CD8-positive, alpha-beta memory T cell (primary cell): ENCODE measurements at regions of chr1 and their contacts with region 1.

Region 1: GRCh38 chr1:178532392-178532791 is 19.5 kb downstream of the TEX35 start:
- DNase-seq: peak; percentile 53 to 71 (median 59)
- H3K4me3 ChIP-seq: no peak overlapping the region
- H3K4me3 Mint-ChIP-seq: peak overlapping the region in 1 of 7 donors; percentile 73
- H3K27ac ChIP-seq: no peak overlapping the region
- H3K27ac Mint-ChIP-seq: no peak overlapping the region
- H3K4me1 ChIP-seq: peaks cover 4% of the 10 kb centered on the region
- H3K4me1 Mint-ChIP-seq: peaks cover 0 to 5% (median 2%) of the 10 kb centered on the region in 3 donors
- H3K27me3 ChIP-seq: no peaks in the 10 kb centered on the region
- H3K27me3 Mint-ChIP-seq: peaks cover 2 to 7% of the 10 kb centered on the region in 2 donors

Region 2: DNA sequence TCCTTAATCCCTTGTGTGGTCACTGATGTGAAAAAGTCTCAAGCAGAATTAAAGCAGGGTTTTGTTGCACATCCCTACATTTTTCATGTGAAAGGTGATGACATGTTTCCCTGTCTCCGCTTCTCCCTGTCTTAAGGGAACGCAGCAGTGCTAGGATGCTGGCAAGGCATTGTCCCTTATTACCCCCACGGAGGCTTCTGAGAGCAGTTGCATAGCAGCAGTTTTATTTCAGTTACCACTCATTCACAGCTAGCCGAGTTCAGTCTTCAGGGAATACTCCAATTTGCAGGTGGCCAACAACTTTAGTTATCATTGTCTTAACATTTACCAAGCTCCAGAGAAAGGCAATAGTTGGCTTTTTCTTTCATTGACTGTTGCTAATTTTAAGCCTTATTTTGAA is 124.7 kb before region 1 on chr1:
- CTCF ChIA-PET with region 1: no interaction called
- POLR2A ChIA-PET with region 1: no interaction called
- DNase-seq: no peak
- H3K4me3 ChIP-seq: no peak overlapping the region
- H3K4me3 Mint-ChIP-seq: no peak overlapping the region
- H3K27ac ChIP-seq: no peak overlapping the region
- H3K27ac Mint-ChIP-seq: no peak overlapping the region
- H3K4me1 ChIP-seq: no peaks in the 10 kb centered on the region
- H3K4me1 Mint-ChIP-seq: no peaks in the 10 kb centered on the region
- H3K27me3 ChIP-seq: no peaks in the 10 kb centered on the region
- H3K27me3 Mint-ChIP-seq: peaks cover 1 to 4% of the 10 kb centered on the region in 2 donors

Region 3: GRCh38 chr1:178518894-178519293 is 13.5 kb before region 1 on chr1:
- CTCF ChIA-PET with region 1: interaction called, 10 read pairs
- POLR2A ChIA-PET with region 1: no interaction called
- DNase-seq: no peak
- H3K4me3 ChIP-seq: no peak overlapping the region
- H3K4me3 Mint-ChIP-seq: no peak overlapping the region
- H3K27ac ChIP-seq: no peak overlapping the region
- H3K27ac Mint-ChIP-seq: no peak overlapping the region
- H3K4me1 ChIP-seq: no peaks in the 10 kb centered on the region
- H3K4me1 Mint-ChIP-seq: no peaks in the 10 kb centered on the region
- H3K27me3 ChIP-seq: no peaks in the 10 kb centered on the region
- H3K27me3 Mint-ChIP-seq: peaks cover 0 to 2% of the 10 kb centered on the region in 2 donors

Region 4: DNA sequence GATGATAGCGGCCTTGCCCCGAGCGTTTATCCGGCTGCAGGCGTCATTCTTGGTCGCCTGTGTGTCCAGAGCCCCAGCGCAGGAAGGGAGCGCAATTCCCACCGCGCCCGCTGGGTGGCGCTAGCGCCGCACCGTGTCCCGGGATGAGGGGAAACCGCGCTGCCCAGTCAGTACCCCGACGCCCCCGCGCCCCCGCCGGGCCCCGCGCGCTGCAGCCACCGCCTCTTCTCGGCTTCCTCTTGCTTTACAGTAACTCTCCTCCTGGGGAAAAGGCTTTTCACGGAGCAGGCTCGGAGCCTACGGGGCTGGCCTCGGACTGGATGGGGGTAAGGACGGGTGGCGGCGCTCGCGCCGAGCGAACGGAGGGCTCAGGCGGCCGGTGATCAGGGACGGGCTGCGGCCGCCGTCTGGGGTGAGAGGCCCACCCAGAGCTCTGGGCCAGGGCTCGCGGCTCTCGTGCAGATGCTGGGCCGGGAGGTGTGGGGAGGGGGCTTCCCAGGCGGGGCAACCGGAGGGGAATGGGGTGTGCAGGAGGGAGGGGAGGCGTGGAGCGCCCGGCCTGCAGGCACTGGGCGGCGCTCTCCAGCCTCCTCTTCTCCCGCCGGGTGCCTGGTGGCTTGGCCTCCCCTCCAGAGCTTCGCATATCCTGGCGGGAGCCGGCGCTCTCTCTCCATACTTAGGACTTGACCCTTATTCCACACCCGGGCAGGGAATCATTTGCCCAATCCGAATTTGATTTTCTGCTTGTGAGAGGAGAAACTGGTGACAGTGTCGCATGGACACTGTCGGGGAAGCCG is 10.4 kb after region 1 on chr1:
- CTCF ChIA-PET with region 1: interaction called, 12 read pairs
- POLR2A ChIA-PET with region 1: interaction called, 3 read pairs
- DNase-seq: peak; percentile 73 to 85 (median 80)
- H3K4me3 ChIP-seq: peak overlapping the region; percentile 92
- H3K4me3 Mint-ChIP-seq: peak overlapping the region; percentile 92 to 98 (median 92)
- H3K27ac ChIP-seq: peak overlapping the region; percentile 43
- H3K27ac Mint-ChIP-seq: peak overlapping the region; percentile 36 to 94 (median 84)
- H3K4me1 ChIP-seq: peaks cover 11% of the 10 kb centered on the region
- H3K4me1 Mint-ChIP-seq: peaks cover 5 to 27% (median 17%) of the 10 kb centered on the region in 3 donors
- H3K27me3 ChIP-seq: no peaks in the 10 kb centered on the region
- H3K27me3 Mint-ChIP-seq: peaks cover 0 to 4% of the 10 kb centered on the region in 2 donors

Region 5: DNA sequence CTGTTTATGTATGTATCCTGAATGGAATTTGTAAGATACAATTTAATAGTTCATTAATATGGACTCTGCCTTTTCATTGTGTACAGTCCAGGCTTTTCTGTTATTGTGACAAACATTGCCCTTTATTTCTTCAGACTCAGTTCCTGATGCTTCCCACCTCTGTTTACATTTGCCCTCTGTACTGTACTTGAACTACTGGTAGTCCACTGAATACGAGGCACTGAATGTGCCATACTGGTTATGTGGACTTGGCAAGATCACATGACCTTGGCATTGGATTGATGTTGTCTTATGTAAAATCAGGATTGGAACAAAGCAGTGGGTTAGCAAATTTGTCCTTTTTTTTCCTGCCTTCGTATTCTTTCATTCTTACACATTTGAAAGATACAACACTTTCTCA is 220.5 kb after region 1 on chr1:
- CTCF ChIA-PET with region 1: interaction called, 10 read pairs
- POLR2A ChIA-PET with region 1: no interaction called
- DNase-seq: no peak
- H3K4me3 ChIP-seq: no peak overlapping the region
- H3K4me3 Mint-ChIP-seq: no peak overlapping the region
- H3K27ac ChIP-seq: no peak overlapping the region
- H3K27ac Mint-ChIP-seq: no peak overlapping the region
- H3K4me1 ChIP-seq: no peaks in the 10 kb centered on the region
- H3K4me1 Mint-ChIP-seq: no peaks in the 10 kb centered on the region
- H3K27me3 ChIP-seq: no peaks in the 10 kb centered on the region
- H3K27me3 Mint-ChIP-seq: peaks cover 0 to 3% of the 10 kb centered on the region in 2 donors

Region 6: DNA sequence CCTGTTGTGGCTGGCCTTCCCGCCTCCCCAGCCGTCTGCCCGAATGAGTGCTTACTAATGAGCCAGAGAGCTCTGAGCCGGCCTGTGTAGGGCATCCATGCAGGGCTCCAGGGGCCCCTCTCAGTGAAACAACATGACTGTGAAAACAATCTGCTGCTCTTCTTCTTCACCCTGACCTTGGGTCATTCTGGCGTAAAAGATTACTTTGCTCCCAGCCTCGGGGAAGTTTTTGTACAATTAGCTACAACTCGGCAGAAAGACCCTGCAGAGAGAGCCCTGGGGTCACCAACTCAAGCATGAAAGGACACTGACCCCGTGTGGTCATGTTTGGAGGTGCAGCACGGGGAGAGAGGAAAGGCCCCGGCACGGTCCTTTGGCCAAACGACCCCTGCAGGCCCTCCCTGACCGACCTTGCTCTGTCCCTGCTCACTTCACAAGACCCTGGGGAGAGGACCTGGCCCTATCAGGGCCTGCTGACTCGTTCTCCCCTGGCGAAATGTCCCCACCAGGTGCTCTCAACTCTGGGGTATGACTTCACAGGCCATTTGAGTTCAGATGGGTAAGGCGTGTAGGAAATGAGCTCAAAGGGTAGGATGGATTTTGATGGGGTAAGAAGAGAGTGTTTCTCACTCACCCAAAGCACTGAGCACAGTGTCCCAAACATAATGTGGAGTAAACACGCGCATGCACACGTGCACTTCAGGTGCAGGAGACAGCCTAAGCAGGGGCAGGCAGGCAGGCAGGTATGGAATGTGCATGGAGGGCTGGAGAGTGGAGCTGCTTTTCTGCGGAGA is 470.4 kb after region 1 on chr1:
- CTCF ChIA-PET with region 1: interaction called, 21 read pairs
- POLR2A ChIA-PET with region 1: no interaction called
- DNase-seq: peak; percentile 40 to 68 (median 54)
- H3K4me3 ChIP-seq: no peak overlapping the region
- H3K4me3 Mint-ChIP-seq: peak overlapping the region in 4 of 7 donors; percentile 27 to 72 (median 57)
- H3K27ac ChIP-seq: no peak overlapping the region
- H3K27ac Mint-ChIP-seq: peak overlapping the region; percentile 15 to 91 (median 78)
- H3K4me1 ChIP-seq: peaks cover 24% of the 10 kb centered on the region
- H3K4me1 Mint-ChIP-seq: peaks cover 21 to 27% (median 22%) of the 10 kb centered on the region in 3 donors
- H3K27me3 ChIP-seq: no peaks in the 10 kb centered on the region
- H3K27me3 Mint-ChIP-seq: peaks cover 0 to 2% of the 10 kb centered on the region in 2 donors